ENCODE measurements at regions of chr3 and their contacts with region 1.

Region 1: GRCh38 chr3:15629860-15630597 is 28.5 kb downstream of the BTD start:
- DNase-seq: peak in 6 of 10 donors; percentile 39 to 92 (median 66)

Region 2: GRCh38 chr3:15797642-15798303 is 167.7 kb after region 1 on chr3 and contains the start of gene ANKRD28:
- intact Hi-C with region 1: loop called (anchors 5 kb)
- DNase-seq: no peak

Region 3: GRCh38 chr3:16290007-16290826 is 660.2 kb after region 1 on chr3:
- intact Hi-C with region 1: no loop called
- DNase-seq: peak in 5 of 10 donors; percentile 39 to 65 (median 54)